Cardiac septum (tissue), 1 donor: ENCODE measurements at regions of chr1 and their contacts with region 1.

Region 1: DNA sequence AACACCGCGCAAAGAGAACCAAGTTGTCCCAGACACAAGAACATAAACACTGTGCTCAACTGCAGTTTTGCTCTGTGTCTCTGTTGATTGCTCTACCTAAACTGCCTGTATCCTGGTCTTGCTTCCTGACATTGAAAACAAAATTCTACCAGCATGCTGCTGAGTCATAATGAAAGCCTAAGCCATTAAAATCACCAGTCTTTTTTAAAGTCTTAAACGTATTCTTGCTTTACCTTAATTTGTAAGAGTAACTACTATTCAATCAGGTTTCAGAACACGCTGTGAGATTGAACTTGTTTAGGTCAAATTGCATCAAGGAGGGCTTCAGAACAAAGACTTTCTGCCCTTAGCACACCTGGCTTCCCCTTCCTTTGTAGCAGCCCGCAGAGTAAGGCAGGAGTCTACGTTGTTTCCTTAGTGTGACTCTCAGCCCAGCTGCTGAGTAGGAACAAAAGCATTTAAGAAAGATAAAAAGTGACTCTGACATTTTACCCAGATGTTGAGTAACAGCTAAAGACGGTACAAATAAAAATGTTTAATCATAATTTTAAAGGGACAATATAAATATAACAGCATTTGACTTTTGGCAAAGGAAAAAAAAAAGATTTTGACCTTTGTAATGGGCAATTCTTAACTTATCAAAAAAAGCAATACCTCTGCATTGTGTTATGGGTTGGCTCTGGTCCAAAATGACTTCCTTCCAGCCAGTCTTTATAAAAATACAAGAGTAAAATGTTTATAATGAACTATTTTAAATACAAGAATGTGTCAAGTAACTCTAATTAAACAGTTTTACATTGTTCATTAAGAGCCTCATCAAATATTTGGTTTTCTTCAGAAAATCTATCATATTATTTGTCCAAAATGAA is 186.9 kb upstream of the ADGRL4 start:
- DNase-seq: no peak

Region 2: GRCh38 chr1:78839704-78840277 is 353.7 kb before region 1 on chr1:
- intact Hi-C with region 1: loop called (anchors 2 kb)
- DNase-seq: no peak

Region 3: DNA sequence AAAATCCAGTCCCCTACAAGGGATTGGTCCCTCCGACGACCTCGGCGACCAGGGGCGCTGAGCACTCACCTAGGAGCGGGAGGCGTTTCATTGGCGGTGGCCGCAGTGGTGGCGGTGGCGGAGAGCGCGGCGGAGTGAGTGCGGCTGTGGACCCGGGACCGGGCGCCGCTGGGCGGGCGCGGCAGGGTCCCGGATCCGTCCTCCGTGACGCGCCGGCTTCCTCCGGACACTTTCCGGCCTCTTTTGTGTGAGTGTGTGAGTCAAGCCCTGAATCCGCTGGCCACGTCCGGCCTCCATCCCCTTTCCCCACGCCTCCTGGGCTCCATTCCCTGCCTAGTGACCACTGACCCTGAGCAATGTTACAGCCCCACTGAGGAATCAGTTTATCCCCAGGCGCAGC is 186.9 kb before region 1 on chr1 and contains the start of gene ADGRL4:
- intact Hi-C with region 1: loop called (anchors 5 kb)
- DNase-seq: peak; percentile 81
- total RNA-seq, gene ADGRL4: 23.5 TPM

Region 4: GRCh38 chr1:79079770-79080169 is 113.7 kb before region 1 on chr1:
- intact Hi-C with region 1: loop called (anchors 2 kb)
- DNase-seq: no peak

Region 5: GRCh38 chr1:79090985-79091384 is 102.5 kb before region 1 on chr1:
- intact Hi-C with region 1: no loop called
- DNase-seq: no peak

Region 6: DNA sequence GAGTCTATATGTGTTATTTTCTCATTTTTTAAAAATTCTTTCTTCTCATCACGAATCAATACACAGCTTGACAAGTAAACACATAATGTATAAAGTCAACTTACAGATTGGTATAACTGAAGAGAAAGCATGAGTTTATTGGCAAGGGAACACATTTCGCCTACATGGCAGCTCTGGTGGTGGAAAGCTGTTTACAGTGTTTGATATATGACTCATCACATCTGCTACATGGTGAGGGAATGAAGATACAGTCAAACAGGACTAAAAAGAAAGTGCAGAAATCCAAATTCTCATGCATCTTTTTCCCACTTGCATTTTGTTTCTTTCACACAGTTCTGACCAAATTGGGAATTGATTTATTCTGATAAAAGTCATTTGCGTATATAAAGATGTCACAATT is 64.7 kb before region 1 on chr1:
- intact Hi-C with region 1: no loop called
- DNase-seq: no peak

Region 7: DNA sequence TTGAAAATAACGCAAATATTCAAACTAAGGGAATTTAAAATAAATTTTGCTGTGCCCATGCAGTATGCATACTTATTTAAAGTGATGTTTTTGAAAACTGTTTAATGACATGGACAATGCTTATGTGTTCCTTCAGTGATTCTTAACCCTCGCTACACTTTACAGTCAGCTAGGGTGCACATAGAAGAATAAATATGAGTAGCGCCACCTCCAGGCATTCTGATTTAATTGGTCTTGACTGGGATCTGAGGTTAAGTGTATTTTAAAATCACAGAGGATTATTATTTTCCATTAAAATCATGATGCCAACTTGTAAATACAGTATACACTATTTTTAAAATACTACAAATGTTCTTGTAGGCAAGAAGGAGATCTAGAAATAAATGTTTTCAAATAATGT is 186.6 kb after region 1 on chr1:
- intact Hi-C with region 1: no loop called
- DNase-seq: no peak